ENCODE measurements at regions of chr1 and their contacts with region 1.

Region 1: GRCh38 chr1:228139944-228140656 is at the start of gene GUK1:
- DNase-seq: peak; percentile 100
- H3K4me3 Mint-ChIP-seq: peak within 1 kb of the TSS; percentile 97
- H3K27ac Mint-ChIP-seq: peak within 1 kb of the TSS; percentile 98
- H3K4me1 Mint-ChIP-seq: peaks cover 25% of the 10 kb centered on the region
- H3K27me3 Mint-ChIP-seq: no peaks in the 10 kb centered on the region
- total RNA-seq, gene GUK1: 206 TPM

Region 2: GRCh38 chr1:228031276-228031995 is 108.7 kb before region 1 on chr1:
- CTCF ChIA-PET with region 1: no interaction called
- intact Hi-C with region 1: no loop called
- DNase-seq: no peak
- H3K4me3 Mint-ChIP-seq: no peak overlapping the region
- H3K27ac Mint-ChIP-seq: no peak overlapping the region
- H3K4me1 Mint-ChIP-seq: no peaks in the 10 kb centered on the region
- H3K27me3 Mint-ChIP-seq: peaks cover 22% of the 10 kb centered on the region

Region 3: GRCh38 chr1:228082135-228082891 is 57.8 kb before region 1 on chr1 and contains the start of gene ARF1:
- CTCF ChIA-PET with region 1: no interaction called
- intact Hi-C with region 1: loop called (anchors 1 kb)
- DNase-seq: peak; percentile 89
- H3K4me3 Mint-ChIP-seq: peak within 1 kb of the TSS; percentile 93
- H3K27ac Mint-ChIP-seq: peak within 1 kb of the TSS; percentile 96
- H3K4me1 Mint-ChIP-seq: peaks cover 50% of the 10 kb centered on the region
- H3K27me3 Mint-ChIP-seq: no peaks in the 10 kb centered on the region
- total RNA-seq, gene ARF1: 346 to 358 TPM

Region 4: GRCh38 chr1:228102791-228103620 is 37.1 kb before region 1 on chr1 and contains the start of gene C1orf35:
- CTCF ChIA-PET with region 1: no interaction called
- intact Hi-C with region 1: loop called (anchors 1 kb)
- DNase-seq: peak; percentile 96
- H3K4me3 Mint-ChIP-seq: peak within 1 kb of the TSS; percentile 92
- H3K27ac Mint-ChIP-seq: peak within 1 kb of the TSS; percentile 87
- H3K4me1 Mint-ChIP-seq: peaks cover 28% of the 10 kb centered on the region
- H3K27me3 Mint-ChIP-seq: no peaks in the 10 kb centered on the region
- total RNA-seq, gene C1orf35: 14.5 to 16.2 TPM

Region 5: GRCh38 chr1:228109073-228109961 is 30.8 kb before region 1 on chr1 and contains the start of gene MRPL55:
- CTCF ChIA-PET with region 1: interaction called, 5 read pairs
- intact Hi-C with region 1: loop called (anchors 1 kb)
- DNase-seq: peak; percentile 98
- H3K4me3 Mint-ChIP-seq: peak within 1 kb of the TSS; percentile 91
- H3K27ac Mint-ChIP-seq: peak within 1 kb of the TSS; percentile 85
- H3K4me1 Mint-ChIP-seq: peaks cover 27% of the 10 kb centered on the region
- H3K27me3 Mint-ChIP-seq: no peaks in the 10 kb centered on the region
- total RNA-seq, gene MRPL55: 45.5 TPM

Region 6: DNA sequence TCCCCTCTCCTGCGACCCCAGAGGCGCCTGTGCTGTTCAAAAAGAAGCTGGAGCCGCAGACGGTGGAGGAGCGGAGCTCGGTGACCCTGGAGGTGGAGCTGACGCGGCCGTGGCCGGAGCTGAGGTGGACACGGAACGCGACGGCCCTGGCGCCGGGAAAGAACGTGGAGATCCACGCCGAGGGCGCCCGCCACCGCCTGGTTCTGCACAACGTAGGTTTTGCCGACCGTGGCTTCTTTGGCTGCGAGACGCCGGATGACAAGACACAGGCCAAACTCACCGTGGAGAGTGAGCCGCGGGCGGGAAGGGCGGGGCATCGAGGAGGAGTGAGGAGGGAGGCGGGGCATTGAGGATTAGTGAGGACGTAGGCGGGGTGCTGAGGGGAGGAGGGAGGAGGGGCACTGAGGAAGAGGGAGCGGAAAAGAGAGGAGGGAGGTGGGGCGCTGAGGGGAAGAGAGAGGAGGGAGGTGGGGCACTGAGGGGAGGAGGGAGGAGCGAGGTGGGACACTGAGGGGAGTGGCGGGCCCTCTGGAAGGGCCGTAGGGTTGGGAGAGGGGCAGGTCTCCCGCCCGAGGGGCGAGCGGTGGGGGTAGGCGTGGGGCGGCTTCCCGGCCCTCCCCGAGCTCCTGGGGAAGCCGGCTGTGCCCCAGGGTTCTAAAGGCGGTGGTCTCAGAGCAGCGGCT is 135.8 kb after region 1 on chr1:
- CTCF ChIA-PET with region 1: no interaction called
- intact Hi-C with region 1: loop called (anchors 2 kb)
- DNase-seq: peak; percentile 96
- H3K4me3 Mint-ChIP-seq: peak overlapping the region; percentile 72
- H3K27ac Mint-ChIP-seq: no peak overlapping the region
- H3K4me1 Mint-ChIP-seq: peaks cover 5% of the 10 kb centered on the region
- H3K27me3 Mint-ChIP-seq: no peaks in the 10 kb centered on the region

Region 7: GRCh38 chr1:228457396-228458176 is 317.5 kb after region 1 on chr1:
- CTCF ChIA-PET with region 1: no interaction called
- intact Hi-C with region 1: loop called (anchors 1 kb)
- DNase-seq: peak; percentile 93
- H3K4me3 Mint-ChIP-seq: peak overlapping the region; percentile 95
- H3K27ac Mint-ChIP-seq: peak overlapping the region; percentile 97
- H3K4me1 Mint-ChIP-seq: peaks cover 32% of the 10 kb centered on the region
- H3K27me3 Mint-ChIP-seq: peaks cover 7% of the 10 kb centered on the region

Region 8: DNA sequence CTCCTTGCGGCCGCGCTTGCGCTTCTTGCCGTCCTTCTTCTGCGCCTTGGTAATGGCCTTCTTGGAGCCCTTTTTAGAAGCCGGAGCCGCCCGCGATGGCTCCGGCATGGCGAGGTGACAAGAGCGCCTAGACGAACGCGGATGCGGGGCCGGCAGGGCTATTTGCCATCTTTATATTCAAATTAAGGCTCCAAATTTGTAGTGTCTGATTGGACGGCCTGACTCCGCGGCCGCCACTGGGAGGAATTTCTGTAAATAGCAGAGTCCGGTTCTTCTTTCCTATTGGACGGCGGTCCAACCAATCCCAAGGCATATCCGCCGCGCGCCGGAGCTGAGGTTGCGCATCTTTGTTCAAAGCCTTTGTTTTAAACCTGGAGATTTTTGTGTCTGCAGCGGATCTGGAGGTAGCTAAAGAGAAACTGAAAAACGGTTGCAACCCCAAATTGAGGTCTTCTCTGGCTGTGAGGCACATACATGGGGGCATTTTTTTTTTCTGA is 324.4 kb after region 1 on chr1:
- CTCF ChIA-PET with region 1: no interaction called
- intact Hi-C with region 1: loop called (anchors 1 kb)
- DNase-seq: peak; percentile 96
- H3K4me3 Mint-ChIP-seq: peak overlapping the region; percentile 91
- H3K27ac Mint-ChIP-seq: peak overlapping the region; percentile 94
- H3K4me1 Mint-ChIP-seq: peaks cover 37% of the 10 kb centered on the region
- H3K27me3 Mint-ChIP-seq: peaks cover 19% of the 10 kb centered on the region

Measured in activated naive CD4-positive, alpha-beta T cell treated with anti-CD3 and anti-CD28 coated beads for 36 hours (primary cell).